Heart left ventricle (tissue), 16 donors: ENCODE measurements at regions of chr2 and their contacts with region 1.

Region 1: GRCh38 chr2:25131567-25132298 is 36.6 kb downstream of the POMC start:
- DNase-seq: peak in 2 of 5 donors; percentile 25 to 36
- ATAC-seq: peak; percentile 26 to 60 (median 40)
- H3K4me3 ChIP-seq: peak overlapping the region in 11 of 12 donors; percentile 16 to 48 (median 31)
- H3K27ac ChIP-seq: no peak overlapping the region
- H3K4me1 ChIP-seq: peaks cover 0 to 28% (median 8%) of the 10 kb centered on the region in 12 donors
- H3K27me3 ChIP-seq: peaks cover 0 to 26% (median 0%) of the 10 kb centered on the region in 9 donors
- CTCF ChIP-seq: no peak
- POLR2A ChIP-seq: no peak

Region 2: GRCh38 chr2:24409700-24410556 is 721.8 kb before region 1 on chr2:
- intact Hi-C with region 1: loop called in 1 of 10 experiments (anchors 10 kb)
- DNase-seq: peak in 2 of 5 donors; percentile 20 to 27
- ATAC-seq: peak in 3 of 4 donors; percentile 73 to 89 (median 78)
- H3K4me3 ChIP-seq: no peak overlapping the region
- H3K27ac ChIP-seq: no peak overlapping the region
- H3K4me1 ChIP-seq: no peaks in the 10 kb centered on the region
- H3K27me3 ChIP-seq: peaks cover 0 to 14% (median 0%) of the 10 kb centered on the region in 9 donors
- CTCF ChIP-seq: peak; percentile 74 to 92 (median 82)
- POLR2A ChIP-seq: no peak

Region 3: GRCh38 chr2:24977631-24978030 is 154.1 kb before region 1 on chr2:
- intact Hi-C with region 1: loop called (anchors 1 to 2 kb)
- DNase-seq: no peak
- ATAC-seq: no peak
- H3K4me3 ChIP-seq: no peak overlapping the region
- H3K27ac ChIP-seq: no peak overlapping the region
- H3K4me1 ChIP-seq: peaks cover 0 to 18% (median 6%) of the 10 kb centered on the region in 12 donors
- H3K27me3 ChIP-seq: no peaks in the 10 kb centered on the region
- CTCF ChIP-seq: no peak
- POLR2A ChIP-seq: no peak

Region 4: GRCh38 chr2:25041928-25042320 is 89.8 kb before region 1 on chr2 and contains the start of gene EFR3B:
- intact Hi-C with region 1: loop called in 7 of 10 experiments (anchors 1 to 10 kb)
- DNase-seq: peak; percentile 96 to 98 (median 97)
- ATAC-seq: peak; percentile 97 to 99 (median 98)
- H3K4me3 ChIP-seq: peak within 1 kb of the TSS; percentile 56 to 97 (median 84)
- H3K27ac ChIP-seq: peak within 1 kb of the TSS; percentile 71 to 92 (median 88)
- H3K4me1 ChIP-seq: peaks cover 0 to 26% (median 17%) of the 10 kb centered on the region in 12 donors
- H3K27me3 ChIP-seq: peaks cover 0 to 13% (median 0%) of the 10 kb centered on the region in 9 donors
- CTCF ChIP-seq: peak in 4 of 12 donors; percentile 2 to 12 (median 10)
- POLR2A ChIP-seq: peak in 1 of 2 donors; percentile 67
- total RNA-seq, gene EFR3B: 4.3 to 13.8 (median 6.3) TPM

Region 5: GRCh38 chr2:25063876-25064660 is 67.7 kb before region 1 on chr2:
- intact Hi-C with region 1: no loop called
- DNase-seq: peak in 1 of 5 donors; percentile 49
- ATAC-seq: peak; percentile 60 to 84 (median 74)
- H3K4me3 ChIP-seq: peak overlapping the region in 4 of 12 donors; percentile 0 to 8 (median 5)
- H3K27ac ChIP-seq: peak overlapping the region in 10 of 12 donors; percentile 41 to 82 (median 59)
- H3K4me1 ChIP-seq: peaks cover 0 to 29% (median 19%) of the 10 kb centered on the region in 12 donors
- H3K27me3 ChIP-seq: no peaks in the 10 kb centered on the region
- CTCF ChIP-seq: no peak
- POLR2A ChIP-seq: no peak

Region 6: DNA sequence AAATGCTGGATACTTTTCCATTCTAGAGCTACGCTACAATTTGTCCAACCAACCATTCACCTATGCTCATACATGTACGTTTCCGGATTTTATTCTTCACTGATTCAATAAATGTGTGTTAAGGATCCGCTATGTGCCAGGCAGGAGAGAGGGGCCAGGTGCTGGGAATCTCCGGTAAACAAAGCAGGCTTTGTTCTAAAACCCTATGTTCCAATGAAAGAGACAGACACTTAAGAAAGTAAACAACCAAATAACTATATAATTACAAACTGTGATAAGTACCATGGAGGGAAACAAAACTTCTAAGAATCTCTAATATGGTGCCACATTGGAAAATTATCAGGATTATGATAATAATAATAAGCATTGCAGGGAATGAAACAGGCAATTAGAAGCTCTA is 58.8 kb after region 1 on chr2:
- intact Hi-C with region 1: loop called in 3 of 10 experiments (anchors 2 to 5 kb)
- DNase-seq: no peak
- ATAC-seq: no peak
- H3K4me3 ChIP-seq: no peak overlapping the region
- H3K27ac ChIP-seq: no peak overlapping the region
- H3K4me1 ChIP-seq: no peaks in the 10 kb centered on the region
- H3K27me3 ChIP-seq: no peaks in the 10 kb centered on the region
- CTCF ChIP-seq: no peak
- POLR2A ChIP-seq: no peak